Activated CD8-positive, alpha-beta memory T cell treated with anti-CD3 and anti-CD28 coated beads, Interleukin-2, amount 10 ng/mL, durations not matched to agents 7 days and 5 days (primary cell): ENCODE measurements at regions of chr12 and their contacts with region 1.

Region 1: GRCh38 chr12:71780237-71780822 is 25.7 kb downstream of the RAB21 start:
- DNase-seq: peak; percentile 52
- ATAC-seq: peak; percentile 39
- H3K4me3 Mint-ChIP-seq: no peak overlapping the region
- H3K27ac Mint-ChIP-seq: peak overlapping the region; percentile 67
- H3K4me1 Mint-ChIP-seq: peaks cover 4% of the 10 kb centered on the region
- H3K27me3 Mint-ChIP-seq: no peaks in the 10 kb centered on the region

Region 2: DNA sequence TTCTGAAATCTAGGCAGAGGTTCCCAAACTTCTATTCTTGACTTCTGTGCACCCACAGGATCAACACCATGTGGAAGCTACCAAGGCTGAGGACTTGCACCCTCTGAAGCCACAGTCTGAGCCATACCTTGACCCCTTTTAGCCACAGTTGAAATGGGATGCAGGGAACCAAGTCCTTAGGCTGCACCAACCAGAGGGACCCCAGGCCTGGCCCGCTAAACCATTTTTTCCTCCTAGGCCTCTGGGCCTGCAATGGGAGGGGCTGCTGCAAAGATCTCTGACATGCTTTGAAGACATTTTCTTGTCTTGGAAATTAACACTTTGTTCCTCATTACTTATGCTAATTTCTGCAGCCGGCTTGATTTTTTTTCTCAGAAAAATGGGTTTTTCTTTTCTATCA is 488.6 kb before region 1 on chr12:
- CTCF ChIA-PET with region 1: no interaction called
- DNase-seq: no peak
- ATAC-seq: no peak
- H3K4me3 Mint-ChIP-seq: no peak overlapping the region
- H3K27ac Mint-ChIP-seq: no peak overlapping the region
- H3K4me1 Mint-ChIP-seq: no peaks in the 10 kb centered on the region
- H3K27me3 Mint-ChIP-seq: no peaks in the 10 kb centered on the region

Region 3: GRCh38 chr12:71797531-71797930 is 17.2 kb after region 1 on chr12:
- CTCF ChIA-PET with region 1: interaction called, 16 read pairs
- DNase-seq: no peak
- ATAC-seq: no peak
- H3K4me3 Mint-ChIP-seq: no peak overlapping the region
- H3K27ac Mint-ChIP-seq: no peak overlapping the region
- H3K4me1 Mint-ChIP-seq: no peaks in the 10 kb centered on the region
- H3K27me3 Mint-ChIP-seq: no peaks in the 10 kb centered on the region

Region 4: GRCh38 chr12:71846322-71846940 is 66.1 kb after region 1 on chr12:
- CTCF ChIA-PET with region 1: interaction called, 31 read pairs
- DNase-seq: no peak
- ATAC-seq: peak; percentile 53
- H3K4me3 Mint-ChIP-seq: no peak overlapping the region
- H3K27ac Mint-ChIP-seq: no peak overlapping the region
- H3K4me1 Mint-ChIP-seq: peaks cover 16% of the 10 kb centered on the region
- H3K27me3 Mint-ChIP-seq: no peaks in the 10 kb centered on the region